ENCODE measurements at regions of chr7 and their contacts with region 1.

Region 1: GRCh38 chr7:135728136-135728669 is at the start of gene SLC13A4:
- DNase-seq: peak in 1 of 2 experiments; percentile 77
- H3K4me3 ChIP-seq: peak within 1 kb of the TSS in 3 of 4 experiments; percentile 12 to 38 (median 20); a peak in 4 of 8 replicates
- H3K27ac ChIP-seq: no peak within 1 kb of the TSS
- H3K4me1 ChIP-seq: peaks cover 3 to 6% (median 5%) of the 10 kb centered on the region in 4 experiments; a peak in 5 of 7 replicates
- H3K27me3 ChIP-seq: no peaks in the 10 kb centered on the region
- CTCF ChIP-seq: no peak
- EP300 ChIP-seq: no peak
- POLR2A ChIP-seq: no peak
- RAD21 ChIP-seq: no peak
- total RNA-seq, gene SLC13A4: 3.7 and 3.9 TPM in 2 replicates

Region 2: GRCh38 chr7:135745703-135746312 is 17.6 kb after region 1 on chr7:
- CTCF ChIA-PET with region 1: interaction called, 10 read pairs
- POLR2A ChIA-PET with region 1: interaction called, 3 read pairs
- DNase-seq: no peak
- H3K4me3 ChIP-seq: no peak overlapping the region
- H3K27ac ChIP-seq: no peak overlapping the region
- H3K4me1 ChIP-seq: no peaks in the 10 kb centered on the region; a peak in 1 of 7 replicates
- H3K27me3 ChIP-seq: no peaks in the 10 kb centered on the region
- CTCF ChIP-seq: no peak
- EP300 ChIP-seq: no peak
- POLR2A ChIP-seq: no peak
- RAD21 ChIP-seq: no peak

Measured in H1 (cell line).